Caco-2 (cell line): ENCODE measurements at regions of chr12 and their contacts with region 1.

Region 1: DNA sequence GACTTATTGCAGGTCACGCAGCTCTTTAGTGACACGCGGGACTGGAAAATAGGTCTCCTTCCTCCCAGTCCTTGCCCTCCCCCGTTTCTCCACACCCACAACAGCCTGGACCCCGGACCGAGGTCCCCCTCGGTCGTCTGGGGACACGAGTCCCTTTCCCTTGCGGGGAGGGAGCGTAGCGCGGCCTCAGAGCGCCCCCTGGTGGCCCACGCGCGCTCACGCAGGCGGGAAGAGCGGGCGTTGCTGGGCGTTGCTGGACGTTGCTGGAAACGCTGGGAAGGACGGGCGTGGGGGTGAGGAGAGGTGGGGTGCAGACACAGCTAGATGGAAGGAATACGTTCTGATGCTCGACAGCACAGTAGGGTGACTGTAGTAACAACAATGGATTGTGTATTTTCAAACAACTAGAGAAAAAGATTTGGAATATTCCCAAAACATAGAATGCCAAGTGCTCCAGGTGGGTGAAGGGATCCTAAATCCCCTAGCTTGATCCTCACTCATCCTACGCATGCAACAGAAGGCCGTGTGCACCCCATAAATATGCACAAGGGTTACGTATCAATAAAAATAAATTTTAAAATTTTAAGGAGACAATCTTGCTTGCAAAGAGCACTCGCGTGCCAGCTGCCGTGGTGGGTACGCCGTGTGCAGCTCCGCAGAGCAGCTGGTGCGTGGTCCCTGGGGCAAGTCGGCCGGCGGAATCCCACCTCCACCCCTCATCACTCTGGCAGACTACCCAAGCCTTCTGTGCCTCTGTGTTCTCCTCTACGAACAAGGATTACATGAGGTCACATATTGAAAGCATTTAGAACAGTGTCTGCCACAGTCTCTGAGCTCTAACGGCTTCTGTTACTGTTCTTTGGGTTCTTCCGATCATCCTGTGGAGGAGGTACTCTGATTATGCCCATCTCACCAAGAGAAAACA is 87.4 kb downstream of the B4GALNT3 start:
- DNase-seq: peak; percentile 80 to 91
- H3K4me3 ChIP-seq: no peak overlapping the region
- H3K4me3 Mint-ChIP-seq: no peak overlapping the region
- H3K27ac Mint-ChIP-seq: peak overlapping the region; percentile 1
- H3K4me1 ChIP-seq: peaks cover 12% of the 10 kb centered on the region
- H3K4me1 Mint-ChIP-seq: peaks cover 13% of the 10 kb centered on the region
- H3K27me3 ChIP-seq: no peaks in the 10 kb centered on the region
- H3K27me3 Mint-ChIP-seq: no peaks in the 10 kb centered on the region
- CTCF ChIP-seq: peak; percentile 99 to 100

Region 2: DNA sequence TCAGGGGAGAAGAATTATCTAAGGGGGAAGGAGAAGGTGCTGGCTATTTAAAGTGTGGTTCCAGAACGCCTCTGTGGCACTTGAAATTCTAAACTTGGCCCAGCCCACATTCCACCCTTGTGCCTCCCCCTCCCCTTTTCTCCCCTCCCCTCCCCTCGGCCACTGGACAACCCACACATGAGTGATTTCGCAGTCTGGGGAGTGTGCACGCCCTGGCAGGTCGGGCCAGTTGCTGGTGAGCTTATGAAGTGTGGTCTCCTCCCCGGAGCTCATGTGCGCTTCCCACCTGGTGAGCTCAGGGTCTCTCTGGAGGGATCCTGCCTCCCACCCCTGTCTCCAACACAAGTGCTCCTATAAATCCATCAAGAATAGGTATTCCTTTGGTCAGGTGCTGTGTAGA is 284.4 kb before region 1 on chr12 and contains the start of gene SLC6A13:
- CTCF ChIA-PET with region 1: no interaction called
- POLR2A ChIA-PET with region 1: no interaction called
- intact Hi-C with region 1: loop called (anchors 5 kb)
- DNase-seq: peak in 1 of 2 experiments; percentile 40
- H3K4me3 ChIP-seq: no peak within 1 kb of the TSS
- H3K4me3 Mint-ChIP-seq: peak within 1 kb of the TSS; percentile 6
- H3K27ac Mint-ChIP-seq: no peak within 1 kb of the TSS
- H3K4me1 ChIP-seq: no peaks in the 10 kb centered on the region
- H3K4me1 Mint-ChIP-seq: peaks cover 11% of the 10 kb centered on the region
- H3K27me3 ChIP-seq: no peaks in the 10 kb centered on the region
- H3K27me3 Mint-ChIP-seq: peaks cover 25% of the 10 kb centered on the region
- CTCF ChIP-seq: no peak
- total RNA-seq, gene SLC6A13: 1.0 and 1.3 TPM in 2 replicates

Region 3: GRCh38 chr12:442235-442884 is 104.8 kb before region 1 on chr12:
- CTCF ChIA-PET with region 1: interaction called, 21 read pairs
- POLR2A ChIA-PET with region 1: interaction called, 3 read pairs
- intact Hi-C with region 1: loop called (anchors 1 kb)
- DNase-seq: peak; percentile 72 to 83
- H3K4me3 ChIP-seq: no peak overlapping the region
- H3K4me3 Mint-ChIP-seq: no peak overlapping the region
- H3K27ac Mint-ChIP-seq: no peak overlapping the region
- H3K4me1 ChIP-seq: no peaks in the 10 kb centered on the region
- H3K4me1 Mint-ChIP-seq: no peaks in the 10 kb centered on the region
- H3K27me3 ChIP-seq: no peaks in the 10 kb centered on the region
- H3K27me3 Mint-ChIP-seq: no peaks in the 10 kb centered on the region
- CTCF ChIP-seq: peak; percentile 87 to 96